Caco-2 (cell line): ENCODE measurements at regions of chr11 and their contacts with region 1.

Region 1: GRCh38 chr11:114563077-114563476 is 3.4 kb upstream of the NXPE1 start:
- DNase-seq: no peak
- H3K4me3 ChIP-seq: no peak overlapping the region
- H3K4me3 Mint-ChIP-seq: peak overlapping the region; percentile 11
- H3K27ac Mint-ChIP-seq: peak overlapping the region; percentile 3
- H3K4me1 ChIP-seq: peaks cover 30% of the 10 kb centered on the region
- H3K4me1 Mint-ChIP-seq: peaks cover 36% of the 10 kb centered on the region
- H3K27me3 ChIP-seq: no peaks in the 10 kb centered on the region; the same call in 1 of the 2 replicates
- H3K27me3 Mint-ChIP-seq: no peaks in the 10 kb centered on the region
- CTCF ChIP-seq: no peak

Region 2: GRCh38 chr11:114017723-114018122 is 545.4 kb before region 1 on chr11:
- CTCF ChIA-PET with region 1: no interaction called
- POLR2A ChIA-PET with region 1: no interaction called
- intact Hi-C with region 1: no loop called
- DNase-seq: no peak
- H3K4me3 ChIP-seq: no peak overlapping the region
- H3K4me3 Mint-ChIP-seq: no peak overlapping the region
- H3K27ac Mint-ChIP-seq: no peak overlapping the region
- H3K4me1 ChIP-seq: no peaks in the 10 kb centered on the region
- H3K4me1 Mint-ChIP-seq: no peaks in the 10 kb centered on the region
- H3K27me3 ChIP-seq: no peaks in the 10 kb centered on the region
- H3K27me3 Mint-ChIP-seq: peaks cover 5% of the 10 kb centered on the region
- CTCF ChIP-seq: no peak

Region 3: GRCh38 chr11:114501901-114502300 is 61.2 kb before region 1 on chr11:
- CTCF ChIA-PET with region 1: no interaction called
- POLR2A ChIA-PET with region 1: no interaction called
- intact Hi-C with region 1: loop called (anchors 5 kb)
- DNase-seq: no peak
- H3K4me3 ChIP-seq: no peak overlapping the region
- H3K4me3 Mint-ChIP-seq: no peak overlapping the region
- H3K27ac Mint-ChIP-seq: no peak overlapping the region
- H3K4me1 ChIP-seq: no peaks in the 10 kb centered on the region
- H3K4me1 Mint-ChIP-seq: no peaks in the 10 kb centered on the region
- H3K27me3 ChIP-seq: no peaks in the 10 kb centered on the region
- H3K27me3 Mint-ChIP-seq: peaks cover 5% of the 10 kb centered on the region
- CTCF ChIP-seq: no peak

Region 4: DNA sequence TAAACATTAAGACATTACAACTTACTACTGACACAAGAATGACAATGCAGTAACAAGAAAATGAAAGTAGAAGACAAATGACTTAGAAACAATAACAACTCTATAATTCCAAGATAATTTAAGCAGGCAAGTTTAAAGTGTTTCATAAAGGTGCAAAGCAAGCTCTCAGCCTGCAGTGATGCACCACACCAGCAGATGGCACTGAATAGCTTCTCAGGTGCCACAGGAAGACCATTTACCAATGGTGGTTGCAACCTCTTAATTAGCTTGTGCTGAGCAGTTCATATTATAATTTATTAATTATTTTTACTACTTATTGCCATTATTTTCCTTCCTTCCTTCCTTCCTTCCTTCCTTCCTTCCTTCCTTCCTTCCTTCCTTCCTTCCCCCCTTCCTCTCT is 175.9 kb after region 1 on chr11:
- CTCF ChIA-PET with region 1: no interaction called
- POLR2A ChIA-PET with region 1: no interaction called
- intact Hi-C with region 1: no loop called
- DNase-seq: peak; percentile 63 to 67
- H3K4me3 ChIP-seq: no peak overlapping the region
- H3K4me3 Mint-ChIP-seq: no peak overlapping the region
- H3K27ac Mint-ChIP-seq: no peak overlapping the region
- H3K4me1 ChIP-seq: no peaks in the 10 kb centered on the region
- H3K4me1 Mint-ChIP-seq: no peaks in the 10 kb centered on the region
- H3K27me3 ChIP-seq: no peaks in the 10 kb centered on the region
- H3K27me3 Mint-ChIP-seq: peaks cover 13% of the 10 kb centered on the region
- CTCF ChIP-seq: peak; percentile 90 to 97

Region 5: GRCh38 chr11:114821621-114822412 is 258.7 kb after region 1 on chr11:
- CTCF ChIA-PET with region 1: no interaction called
- POLR2A ChIA-PET with region 1: no interaction called
- intact Hi-C with region 1: no loop called
- DNase-seq: no peak
- H3K4me3 ChIP-seq: no peak overlapping the region
- H3K4me3 Mint-ChIP-seq: no peak overlapping the region
- H3K27ac Mint-ChIP-seq: no peak overlapping the region
- H3K4me1 ChIP-seq: no peaks in the 10 kb centered on the region
- H3K4me1 Mint-ChIP-seq: no peaks in the 10 kb centered on the region
- H3K27me3 ChIP-seq: no peaks in the 10 kb centered on the region; the same call in 1 of the 2 replicates
- H3K27me3 Mint-ChIP-seq: peaks cover 14% of the 10 kb centered on the region
- CTCF ChIP-seq: no peak

Region 6: GRCh38 chr11:114892381-114893197 is 329.5 kb after region 1 on chr11:
- CTCF ChIA-PET with region 1: no interaction called
- POLR2A ChIA-PET with region 1: no interaction called
- intact Hi-C with region 1: no loop called
- DNase-seq: peak in 1 of 2 experiments; percentile 53
- H3K4me3 ChIP-seq: no peak overlapping the region
- H3K4me3 Mint-ChIP-seq: no peak overlapping the region
- H3K27ac Mint-ChIP-seq: no peak overlapping the region
- H3K4me1 ChIP-seq: no peaks in the 10 kb centered on the region
- H3K4me1 Mint-ChIP-seq: no peaks in the 10 kb centered on the region
- H3K27me3 ChIP-seq: no peaks in the 10 kb centered on the region; the same call in 1 of the 2 replicates
- H3K27me3 Mint-ChIP-seq: peaks cover 10% of the 10 kb centered on the region
- CTCF ChIP-seq: peak; percentile 61 to 79